PC-9 (cell line): ENCODE measurements at regions of chr4 and their contacts with region 1.

Region 1: GRCh38 chr4:55933611-55934010 is 15.1 kb upstream of the CEP135 start:
- DNase-seq: no peak
- H3K4me3 ChIP-seq: no peak overlapping the region
- H3K27ac ChIP-seq: no peak overlapping the region
- H3K4me1 ChIP-seq: no peaks in the 10 kb centered on the region
- H3K27me3 ChIP-seq: no peaks in the 10 kb centered on the region
- CTCF ChIP-seq: no peak

Region 2: GRCh38 chr4:55435141-55435841 is 498.3 kb before region 1 on chr4:
- CTCF ChIA-PET with region 1: interaction called, 10 read pairs
- POLR2A ChIA-PET with region 1: no interaction called
- intact Hi-C with region 1: no loop called
- DNase-seq: no peak
- H3K4me3 ChIP-seq: no peak overlapping the region
- H3K27ac ChIP-seq: no peak overlapping the region
- H3K4me1 ChIP-seq: no peaks in the 10 kb centered on the region
- H3K27me3 ChIP-seq: no peaks in the 10 kb centered on the region
- CTCF ChIP-seq: peak; percentile 44; the same call in 1 of the 2 replicates